Spleen (tissue), 13 donors: ENCODE measurements at regions of chr9 and their contacts with region 1.

Region 1: DNA sequence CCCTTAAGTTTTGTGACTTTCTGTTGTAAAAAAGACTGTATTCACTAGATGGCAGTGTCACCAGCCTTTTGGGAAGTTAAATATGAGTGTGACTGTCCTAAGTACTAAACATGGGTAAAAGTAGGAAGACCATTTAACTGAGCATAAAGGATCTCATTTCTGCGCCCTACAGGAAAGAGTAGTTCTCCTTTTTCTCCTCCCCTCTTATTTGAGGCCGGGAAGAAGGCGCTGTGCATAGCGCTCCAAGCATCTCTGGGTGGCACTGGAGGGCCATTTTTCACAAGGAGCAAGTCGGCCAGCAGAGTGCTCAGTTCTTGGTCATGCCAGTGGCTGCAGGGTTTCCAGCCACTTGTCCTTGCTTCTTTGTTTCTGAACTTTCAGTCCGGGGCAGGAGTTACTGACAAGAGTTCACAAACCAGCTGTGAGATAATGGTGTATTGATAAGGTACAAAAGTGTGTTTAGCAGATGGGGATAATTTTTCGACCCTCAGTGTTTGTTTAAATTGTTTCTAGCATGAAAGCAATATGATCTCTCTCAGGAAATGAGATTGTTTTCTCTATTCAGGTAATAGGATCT is 227.6 kb upstream of the DMRT1 start:
- DNase-seq: peak; percentile 81
- H3K4me3 ChIP-seq: peak overlapping the region in 1 of 8 donors; percentile 5
- H3K27ac ChIP-seq: peak overlapping the region in 2 of 8 donors; percentile 7 to 49
- H3K4me1 ChIP-seq: peaks cover 0 to 17% (median 12%) of the 10 kb centered on the region in 6 donors
- H3K27me3 ChIP-seq: no peaks in the 10 kb centered on the region
- CTCF ChIP-seq: peak; percentile 53 to 86 (median 73)
- POLR2A ChIP-seq: no peak

Region 2: DNA sequence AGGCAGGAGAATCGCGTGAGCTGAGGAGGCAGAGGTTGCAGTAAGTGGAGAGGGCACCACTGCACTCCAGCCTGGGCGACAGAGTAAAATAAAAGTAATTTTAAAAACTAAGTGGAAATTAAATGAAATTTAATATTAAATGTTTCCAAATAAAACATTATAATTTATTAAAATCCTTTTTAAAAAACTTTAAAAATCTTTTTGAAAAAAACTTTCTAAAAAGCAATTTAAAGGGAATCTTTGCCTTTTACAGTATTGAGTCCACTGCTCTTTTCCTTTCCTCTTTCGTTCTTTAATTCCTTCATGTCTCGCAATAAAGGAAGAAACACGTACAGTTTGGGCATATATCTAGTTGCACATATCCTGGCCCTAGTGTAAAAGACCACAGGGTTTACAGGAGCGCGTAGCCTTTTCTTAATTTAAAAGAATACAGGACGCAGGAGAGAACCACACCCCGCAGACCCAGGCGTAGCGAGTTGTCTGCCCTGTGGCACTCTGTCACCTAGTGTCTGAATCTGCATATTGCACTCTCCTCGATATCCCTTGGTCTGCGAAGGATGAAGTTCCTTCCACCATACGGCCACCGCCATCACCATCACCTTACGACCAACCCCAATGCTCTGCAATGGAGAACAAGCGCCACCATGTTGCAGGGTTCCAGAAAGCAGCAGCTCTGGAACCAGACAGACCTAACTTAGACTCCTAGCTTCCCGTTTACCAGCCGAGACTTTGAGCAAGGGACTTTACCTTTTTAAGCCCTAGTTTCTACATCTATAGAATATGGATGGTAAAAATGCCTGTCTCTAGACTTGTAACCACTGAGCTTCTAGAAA is 150.0 kb after region 1 on chr9:
- intact Hi-C with region 1: loop called (anchors 2 kb)
- DNase-seq: peak; percentile 76
- H3K4me3 ChIP-seq: peak overlapping the region in 1 of 8 donors; percentile 22
- H3K27ac ChIP-seq: no peak overlapping the region
- H3K4me1 ChIP-seq: peaks cover 0 to 9% (median 2%) of the 10 kb centered on the region in 6 donors
- H3K27me3 ChIP-seq: peaks cover 0 to 30% (median 0%) of the 10 kb centered on the region in 7 donors
- CTCF ChIP-seq: peak; percentile 43 to 84 (median 77)
- POLR2A ChIP-seq: no peak